Activated CD4-positive, alpha-beta memory T cell treated with anti-CD3 and anti-CD28 coated beads for 36 hours (primary cell): ENCODE measurements at regions of chr10 and their contacts with region 1.

Region 1: GRCh38 chr10:110871298-110872084 is at the start of gene PDCD4:
- DNase-seq: peak; percentile 97
- H3K4me3 Mint-ChIP-seq: peak within 1 kb of the TSS; percentile 86
- H3K27ac Mint-ChIP-seq: peak within 1 kb of the TSS; percentile 93
- H3K4me1 Mint-ChIP-seq: peaks cover 61% of the 10 kb centered on the region
- H3K27me3 Mint-ChIP-seq: no peaks in the 10 kb centered on the region
- total RNA-seq, gene PDCD4: 123 to 141 TPM

Region 2: GRCh38 chr10:109922976-109923921 is 948.2 kb before region 1 on chr10 and contains the start of gene XPNPEP1:
- CTCF ChIA-PET with region 1: no interaction called
- POLR2A ChIA-PET with region 1: no interaction called
- intact Hi-C with region 1: loop called (anchors 10 kb)
- DNase-seq: peak; percentile 90
- H3K4me3 Mint-ChIP-seq: peak within 1 kb of the TSS; percentile 90
- H3K27ac Mint-ChIP-seq: peak within 1 kb of the TSS; percentile 93
- H3K4me1 Mint-ChIP-seq: peaks cover 56% of the 10 kb centered on the region
- H3K27me3 Mint-ChIP-seq: no peaks in the 10 kb centered on the region
- total RNA-seq, gene XPNPEP1: 66.4 to 66.6 TPM

Region 3: DNA sequence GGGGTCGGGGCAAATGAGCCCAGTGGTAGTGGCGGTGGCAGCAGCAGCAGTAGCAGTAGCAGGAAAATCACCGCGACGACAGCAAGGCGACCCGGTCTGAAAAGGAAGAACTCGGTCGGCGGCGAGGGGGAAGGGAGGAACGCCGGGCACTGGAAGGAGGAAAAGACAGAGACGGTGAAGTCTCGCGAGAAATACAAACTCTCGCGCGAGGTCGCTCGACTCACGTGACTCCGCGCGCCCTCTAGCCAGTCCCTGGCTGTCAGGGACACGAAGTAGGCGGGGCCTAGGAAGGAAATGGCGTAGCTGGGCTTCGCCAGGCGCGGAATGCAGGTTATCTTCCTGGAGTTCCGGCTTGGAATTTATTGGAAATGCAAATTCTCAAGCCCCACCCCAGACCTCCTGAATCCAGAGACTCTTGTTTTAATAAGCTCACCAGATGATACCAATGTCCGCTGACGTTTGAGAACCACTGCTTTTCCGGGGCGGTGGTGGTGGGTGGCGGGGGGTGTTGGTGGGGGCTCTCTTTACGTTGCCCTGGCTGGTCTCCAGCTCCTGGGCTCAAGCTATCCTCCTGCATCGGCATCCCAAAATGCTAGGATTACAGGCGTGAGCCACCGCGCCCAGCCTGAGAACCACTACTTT is 566.6 kb before region 1 on chr10 and contains the start of gene SMNDC1:
- CTCF ChIA-PET with region 1: no interaction called
- POLR2A ChIA-PET with region 1: no interaction called
- intact Hi-C with region 1: loop called (anchors 10 kb)
- DNase-seq: peak; percentile 99
- H3K4me3 Mint-ChIP-seq: peak within 1 kb of the TSS; percentile 93
- H3K27ac Mint-ChIP-seq: peak within 1 kb of the TSS; percentile 97
- H3K4me1 Mint-ChIP-seq: peaks cover 49% of the 10 kb centered on the region
- H3K27me3 Mint-ChIP-seq: no peaks in the 10 kb centered on the region
- total RNA-seq, gene SMNDC1: 44.1 to 48.3 TPM

Region 4: DNA sequence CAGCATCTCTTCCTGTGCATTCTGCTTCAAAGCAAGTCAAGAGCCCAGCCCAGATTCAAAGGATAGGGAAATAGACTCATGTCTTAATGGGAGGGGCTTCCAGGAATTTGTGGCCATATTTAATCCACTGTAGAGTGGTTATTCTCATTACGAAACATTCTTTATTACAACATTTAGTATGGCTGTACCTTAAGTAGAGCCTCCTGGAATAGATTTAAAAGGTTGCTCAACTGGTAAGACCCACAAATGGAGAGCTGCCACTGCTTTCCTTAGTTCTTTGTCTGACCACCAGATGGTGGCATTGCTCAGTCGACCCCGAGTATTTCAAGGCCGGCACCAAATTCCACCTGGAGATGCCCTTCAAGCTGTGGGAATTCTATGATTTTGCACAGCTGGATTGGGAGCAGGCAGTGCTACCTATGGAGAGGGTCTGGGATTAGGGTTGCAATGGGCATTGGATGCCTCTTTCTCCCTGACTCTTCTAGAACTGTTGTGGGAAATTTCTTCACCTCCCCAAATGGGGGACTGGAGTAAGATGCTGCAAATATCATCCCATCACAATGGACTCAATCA is 125.2 kb before region 1 on chr10:
- CTCF ChIA-PET with region 1: interaction called, 4 read pairs
- POLR2A ChIA-PET with region 1: no interaction called
- intact Hi-C with region 1: loop called (anchors 1 kb)
- DNase-seq: peak; percentile 57
- H3K4me3 Mint-ChIP-seq: no peak overlapping the region
- H3K27ac Mint-ChIP-seq: no peak overlapping the region
- H3K4me1 Mint-ChIP-seq: peaks cover 54% of the 10 kb centered on the region
- H3K27me3 Mint-ChIP-seq: no peaks in the 10 kb centered on the region

Region 5: GRCh38 chr10:110803830-110804338 is 67.6 kb before region 1 on chr10:
- CTCF ChIA-PET with region 1: interaction called, 6 read pairs
- POLR2A ChIA-PET with region 1: interaction called, 3 read pairs
- intact Hi-C with region 1: loop called (anchors 2 kb)
- DNase-seq: peak; percentile 49
- H3K4me3 Mint-ChIP-seq: no peak overlapping the region
- H3K27ac Mint-ChIP-seq: peak overlapping the region; percentile 15
- H3K4me1 Mint-ChIP-seq: peaks cover 36% of the 10 kb centered on the region
- H3K27me3 Mint-ChIP-seq: no peaks in the 10 kb centered on the region

Region 6: DNA sequence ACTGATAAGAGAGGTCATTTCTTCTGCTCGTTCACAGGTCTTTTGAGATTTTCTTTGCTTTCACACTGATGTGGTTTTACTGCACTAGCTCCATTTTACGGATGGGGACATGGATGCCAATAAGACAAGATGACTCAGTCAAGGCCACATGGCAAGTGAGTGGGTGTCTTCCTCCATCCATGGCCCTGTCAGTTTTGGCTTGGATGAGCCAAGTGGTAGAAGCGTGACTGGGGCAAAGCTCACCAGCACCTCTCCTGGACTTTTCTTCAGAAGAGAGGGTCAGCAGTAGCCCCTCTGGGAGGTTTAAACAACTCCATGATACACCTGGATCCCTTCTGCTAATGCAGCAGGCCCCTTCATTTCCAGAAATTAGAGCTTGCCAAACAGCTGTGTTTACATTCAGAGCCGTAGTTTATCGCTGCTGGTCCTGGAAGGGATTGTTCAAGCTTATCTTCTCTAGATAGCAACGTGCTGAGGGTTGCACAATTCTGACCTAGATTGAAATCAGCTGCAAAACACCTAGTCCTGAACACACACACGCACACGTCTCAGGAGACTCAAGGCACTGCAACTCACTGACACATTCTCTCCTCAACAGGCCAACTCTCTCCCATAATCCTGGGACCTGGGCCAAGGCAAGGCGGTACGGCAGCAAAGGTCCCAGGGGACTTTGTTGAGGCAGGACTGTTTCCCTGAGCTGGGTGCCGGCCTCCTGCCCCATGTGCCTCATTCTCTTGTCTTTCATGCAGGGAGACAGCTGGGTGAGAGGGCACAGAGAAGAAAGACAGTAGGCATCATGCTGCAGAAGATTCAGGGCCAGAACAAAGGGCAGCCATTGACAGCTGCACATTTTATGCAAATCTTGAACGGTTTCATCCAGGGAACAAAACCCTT is 14.0 kb before region 1 on chr10:
- CTCF ChIA-PET with region 1: interaction called, 6 read pairs
- POLR2A ChIA-PET with region 1: interaction called, 29 read pairs
- intact Hi-C with region 1: loop called (anchors 2 kb)
- DNase-seq: peak; percentile 66
- H3K4me3 Mint-ChIP-seq: peak overlapping the region; percentile 25
- H3K27ac Mint-ChIP-seq: peak overlapping the region; percentile 72
- H3K4me1 Mint-ChIP-seq: peaks cover 82% of the 10 kb centered on the region
- H3K27me3 Mint-ChIP-seq: no peaks in the 10 kb centered on the region

Region 7: GRCh38 chr10:110918643-110919363 is 47.3 kb after region 1 on chr10 and contains the start of gene BBIP1:
- CTCF ChIA-PET with region 1: interaction called, 3 read pairs
- POLR2A ChIA-PET with region 1: interaction called, 11 read pairs
- intact Hi-C with region 1: loop called (anchors 1 kb)
- DNase-seq: no peak
- H3K4me3 Mint-ChIP-seq: peak within 1 kb of the TSS; percentile 92
- H3K27ac Mint-ChIP-seq: peak within 1 kb of the TSS; percentile 99
- H3K4me1 Mint-ChIP-seq: peaks cover 39% of the 10 kb centered on the region
- H3K27me3 Mint-ChIP-seq: no peaks in the 10 kb centered on the region
- total RNA-seq, gene BBIP1: 36.4 to 43.9 TPM

Region 8: GRCh38 chr10:110989016-110989415 is 117.5 kb after region 1 on chr10:
- CTCF ChIA-PET with region 1: no interaction called
- POLR2A ChIA-PET with region 1: no interaction called
- intact Hi-C with region 1: no loop called
- DNase-seq: no peak
- H3K4me3 Mint-ChIP-seq: no peak overlapping the region
- H3K27ac Mint-ChIP-seq: no peak overlapping the region
- H3K4me1 Mint-ChIP-seq: peaks cover 32% of the 10 kb centered on the region
- H3K27me3 Mint-ChIP-seq: no peaks in the 10 kb centered on the region